MCF 10A (cell line): ENCODE measurements at regions of chr1 and their contacts with region 1.

Region 1: DNA sequence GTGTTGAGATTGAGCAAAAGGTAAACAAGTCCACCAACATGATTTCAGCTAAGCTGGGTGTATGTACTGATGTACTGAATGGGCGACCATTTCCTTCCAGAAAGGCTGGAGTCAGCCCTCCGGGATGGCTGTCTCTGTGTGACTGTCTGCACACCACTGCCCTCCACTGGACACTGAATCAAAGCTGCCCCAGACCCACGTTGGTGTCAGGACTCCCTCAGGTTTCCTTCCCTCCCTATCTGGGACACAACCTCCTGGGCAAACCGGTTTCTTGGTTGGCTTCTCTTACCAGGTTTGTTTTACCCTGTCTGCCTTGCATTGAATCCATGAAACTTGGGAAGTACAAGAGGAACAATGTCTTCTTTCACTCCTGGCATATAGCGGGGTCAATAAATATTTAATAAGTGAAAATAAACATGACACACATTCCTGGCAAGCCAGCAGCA is 5.3 kb upstream of the SRP9 start:
- DNase-seq: peak; percentile 97
- H3K4me3 Mint-ChIP-seq: no peak overlapping the region
- H3K27ac Mint-ChIP-seq: no peak overlapping the region
- H3K4me1 Mint-ChIP-seq: peaks cover 19% of the 10 kb centered on the region
- H3K27me3 Mint-ChIP-seq: no peaks in the 10 kb centered on the region
- CTCF ChIP-seq: peak; percentile 100

Region 2: DNA sequence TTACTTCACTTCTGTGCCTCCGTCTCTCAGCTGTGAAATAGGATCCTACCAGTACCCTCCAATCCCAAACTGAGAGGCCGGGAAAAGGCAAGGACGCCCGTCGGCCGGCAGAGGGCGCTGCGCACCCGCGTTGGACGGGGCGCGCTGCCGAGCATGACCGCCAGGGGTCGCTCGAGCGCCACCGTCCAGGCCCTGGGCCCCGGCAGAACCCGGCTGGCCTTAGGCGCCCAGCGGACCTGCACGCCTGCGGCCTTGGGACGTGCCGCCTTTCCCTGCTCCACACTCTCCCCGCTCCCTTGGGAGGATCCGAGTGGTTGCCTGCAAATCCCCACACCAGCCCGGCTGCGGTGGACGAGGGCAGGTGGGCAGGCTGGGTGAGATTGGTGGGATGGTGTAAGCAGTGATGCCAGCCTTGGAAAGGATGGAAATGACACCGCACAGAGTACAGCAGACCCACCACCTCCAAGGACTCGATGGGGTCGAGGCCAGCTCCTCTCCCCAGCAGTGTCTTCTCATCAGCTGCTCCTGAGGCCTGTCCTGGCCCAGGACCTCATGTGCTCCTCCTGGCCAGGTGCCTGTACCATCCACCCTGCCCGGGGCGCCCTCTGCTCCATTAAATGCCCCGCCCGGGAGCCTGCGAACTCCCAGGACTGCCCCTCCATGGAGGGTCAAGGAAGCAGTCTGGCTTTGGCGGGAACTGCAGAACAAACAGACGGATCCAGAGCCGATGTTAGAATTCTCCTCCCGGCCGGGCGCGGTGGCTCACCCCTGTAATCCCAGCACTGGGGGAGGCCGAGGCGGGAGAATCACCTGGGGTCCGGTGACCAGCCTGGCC is 297.1 kb before region 1 on chr1:
- CTCF ChIA-PET with region 1: interaction called, 712 read pairs
- POLR2A ChIA-PET with region 1: interaction called, 19 read pairs
- intact Hi-C with region 1: loop called (anchors 1 kb)
- DNase-seq: peak; percentile 85
- H3K4me3 Mint-ChIP-seq: no peak overlapping the region
- H3K27ac Mint-ChIP-seq: no peak overlapping the region
- H3K4me1 Mint-ChIP-seq: no peaks in the 10 kb centered on the region
- H3K27me3 Mint-ChIP-seq: no peaks in the 10 kb centered on the region
- CTCF ChIP-seq: peak; percentile 100

Region 3: GRCh38 chr1:225567590-225568194 is 204.7 kb before region 1 on chr1:
- CTCF ChIA-PET with region 1: interaction called, 136 read pairs
- POLR2A ChIA-PET with region 1: interaction called, 10 read pairs
- intact Hi-C with region 1: no loop called
- DNase-seq: peak; percentile 44
- H3K4me3 Mint-ChIP-seq: no peak overlapping the region
- H3K27ac Mint-ChIP-seq: no peak overlapping the region
- H3K4me1 Mint-ChIP-seq: peaks cover 13% of the 10 kb centered on the region
- H3K27me3 Mint-ChIP-seq: no peaks in the 10 kb centered on the region
- CTCF ChIP-seq: peak; percentile 20

Region 4: GRCh38 chr1:225635649-225636048 is 136.7 kb before region 1 on chr1:
- CTCF ChIA-PET with region 1: interaction called, 16 read pairs
- POLR2A ChIA-PET with region 1: interaction called, 3 read pairs
- intact Hi-C with region 1: no loop called
- DNase-seq: no peak
- H3K4me3 Mint-ChIP-seq: no peak overlapping the region
- H3K27ac Mint-ChIP-seq: no peak overlapping the region
- H3K4me1 Mint-ChIP-seq: peaks cover 10% of the 10 kb centered on the region
- H3K27me3 Mint-ChIP-seq: no peaks in the 10 kb centered on the region
- CTCF ChIP-seq: no peak

Region 5: DNA sequence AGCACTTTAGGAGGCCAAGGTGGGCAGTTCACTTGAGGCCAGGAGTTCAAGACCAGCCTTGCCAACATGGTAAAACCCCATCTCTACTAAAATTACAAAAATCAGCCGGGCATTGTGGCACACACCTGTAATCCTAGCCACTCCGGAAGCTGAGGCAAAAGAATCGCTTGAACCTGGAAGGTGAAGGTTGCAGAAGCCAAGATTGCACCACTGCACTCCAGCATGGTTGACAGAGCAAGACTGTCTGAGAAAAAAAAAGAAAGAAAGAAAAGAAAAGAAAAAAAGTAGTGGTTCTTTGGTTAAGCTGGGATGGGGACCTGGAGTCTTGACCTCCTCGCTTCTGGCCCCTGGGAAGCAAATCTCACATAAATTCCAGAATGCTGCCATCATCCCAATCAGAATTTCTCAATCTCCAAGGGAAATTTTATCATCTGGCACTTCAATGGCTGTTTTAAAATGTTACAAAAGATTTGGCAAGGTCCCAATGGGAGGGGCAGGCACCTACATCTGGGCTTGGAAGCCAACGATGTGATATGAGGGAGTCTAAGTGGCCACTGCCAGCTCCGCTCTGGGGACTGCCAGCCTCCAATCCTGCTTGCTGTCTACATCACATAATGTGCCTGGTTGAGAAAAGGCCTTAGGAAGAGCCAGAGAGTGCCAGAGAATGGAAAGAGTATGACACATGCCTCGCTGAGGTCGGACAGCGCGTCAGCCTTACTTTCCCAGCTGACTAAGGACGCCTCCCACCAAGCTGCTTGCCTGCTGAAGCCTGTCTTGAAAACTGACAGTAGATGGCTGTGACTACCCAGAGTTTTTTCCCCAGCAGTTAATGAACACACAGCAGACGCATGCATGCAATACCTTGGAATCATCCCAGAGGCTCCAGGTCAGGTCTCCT is 36.8 kb before region 1 on chr1:
- CTCF ChIA-PET with region 1: interaction called, 228 read pairs
- POLR2A ChIA-PET with region 1: interaction called, 230 read pairs
- intact Hi-C with region 1: loop called (anchors 1 kb)
- DNase-seq: peak; percentile 100
- H3K4me3 Mint-ChIP-seq: peak overlapping the region; percentile 60
- H3K27ac Mint-ChIP-seq: peak overlapping the region; percentile 89
- H3K4me1 Mint-ChIP-seq: peaks cover 33% of the 10 kb centered on the region
- H3K27me3 Mint-ChIP-seq: no peaks in the 10 kb centered on the region
- CTCF ChIP-seq: peak; percentile 9

Region 6: GRCh38 chr1:225825607-225826007 is 53.3 kb after region 1 on chr1:
- CTCF ChIA-PET with region 1: interaction called, 33 read pairs
- POLR2A ChIA-PET with region 1: interaction called, 85 read pairs
- intact Hi-C with region 1: no loop called
- DNase-seq: no peak
- H3K4me3 Mint-ChIP-seq: no peak overlapping the region
- H3K27ac Mint-ChIP-seq: peak overlapping the region; percentile 3
- H3K4me1 Mint-ChIP-seq: peaks cover 21% of the 10 kb centered on the region
- H3K27me3 Mint-ChIP-seq: no peaks in the 10 kb centered on the region
- CTCF ChIP-seq: no peak

Region 7: DNA sequence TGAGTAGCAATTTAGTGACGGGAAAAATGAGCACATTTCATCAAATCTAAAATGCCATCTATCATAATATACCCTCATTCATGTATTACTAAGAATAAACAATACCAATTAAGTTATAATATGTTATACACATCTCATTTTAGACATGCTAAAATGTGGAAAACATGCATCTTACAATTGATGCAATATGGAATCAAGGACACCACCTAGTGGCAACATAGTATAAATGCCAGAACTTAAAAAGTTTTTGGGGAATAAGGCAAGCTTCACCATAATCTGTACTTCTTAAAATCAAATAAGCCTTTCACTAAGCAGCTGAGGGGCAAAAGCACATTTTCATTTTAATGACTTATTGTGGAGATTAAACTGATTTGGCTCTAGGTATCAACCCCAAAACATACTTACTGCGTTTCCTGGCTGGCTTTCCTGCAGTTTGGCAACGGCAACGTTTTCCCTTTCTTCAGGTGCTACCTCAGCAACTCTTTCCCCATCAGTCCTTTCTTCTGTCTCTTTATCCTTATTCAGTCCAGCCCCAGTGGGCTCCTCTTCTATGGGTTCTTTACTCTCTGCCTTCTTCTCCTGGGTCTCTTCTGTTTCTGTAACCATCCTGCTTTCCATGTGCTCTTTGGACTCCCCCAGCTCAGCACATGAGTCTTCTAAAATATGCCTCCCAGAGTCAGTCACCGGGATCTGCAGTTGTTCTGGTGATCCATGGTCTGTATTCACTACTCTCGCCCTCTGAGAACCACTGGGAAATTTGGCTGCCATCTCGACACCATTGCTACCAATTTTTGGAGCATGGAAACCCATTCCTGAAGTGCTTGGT is 215.4 kb after region 1 on chr1:
- CTCF ChIA-PET with region 1: interaction called, 119 read pairs
- POLR2A ChIA-PET with region 1: interaction called, 38 read pairs
- intact Hi-C with region 1: no loop called
- DNase-seq: peak; percentile 77
- H3K4me3 Mint-ChIP-seq: no peak overlapping the region
- H3K27ac Mint-ChIP-seq: no peak overlapping the region
- H3K4me1 Mint-ChIP-seq: peaks cover 6% of the 10 kb centered on the region
- H3K27me3 Mint-ChIP-seq: no peaks in the 10 kb centered on the region
- CTCF ChIP-seq: peak; percentile 89

Region 8: GRCh38 chr1:227102056-227102455 is 1329.7 kb after region 1 on chr1:
- CTCF ChIA-PET with region 1: no interaction called
- POLR2A ChIA-PET with region 1: no interaction called
- intact Hi-C with region 1: no loop called
- DNase-seq: no peak
- H3K4me3 Mint-ChIP-seq: no peak overlapping the region
- H3K27ac Mint-ChIP-seq: no peak overlapping the region
- H3K4me1 Mint-ChIP-seq: no peaks in the 10 kb centered on the region
- H3K27me3 Mint-ChIP-seq: no peaks in the 10 kb centered on the region
- CTCF ChIP-seq: no peak